Cardiac septum (tissue), 1 donor: ENCODE measurements at regions of chr10 and their contacts with region 1.

Region 1: GRCh38 chr10:131874991-131875451 is 25.8 kb upstream of the PPP2R2D start:
- DNase-seq: no peak

Region 2: GRCh38 chr10:130686689-130687300 is 1188.2 kb before region 1 on chr10:
- intact Hi-C with region 1: loop called (anchors 10 kb)
- DNase-seq: no peak